OCI-LY7 (cell line): ENCODE measurements at regions of chr15 and their contacts with region 1.

Region 1: DNA sequence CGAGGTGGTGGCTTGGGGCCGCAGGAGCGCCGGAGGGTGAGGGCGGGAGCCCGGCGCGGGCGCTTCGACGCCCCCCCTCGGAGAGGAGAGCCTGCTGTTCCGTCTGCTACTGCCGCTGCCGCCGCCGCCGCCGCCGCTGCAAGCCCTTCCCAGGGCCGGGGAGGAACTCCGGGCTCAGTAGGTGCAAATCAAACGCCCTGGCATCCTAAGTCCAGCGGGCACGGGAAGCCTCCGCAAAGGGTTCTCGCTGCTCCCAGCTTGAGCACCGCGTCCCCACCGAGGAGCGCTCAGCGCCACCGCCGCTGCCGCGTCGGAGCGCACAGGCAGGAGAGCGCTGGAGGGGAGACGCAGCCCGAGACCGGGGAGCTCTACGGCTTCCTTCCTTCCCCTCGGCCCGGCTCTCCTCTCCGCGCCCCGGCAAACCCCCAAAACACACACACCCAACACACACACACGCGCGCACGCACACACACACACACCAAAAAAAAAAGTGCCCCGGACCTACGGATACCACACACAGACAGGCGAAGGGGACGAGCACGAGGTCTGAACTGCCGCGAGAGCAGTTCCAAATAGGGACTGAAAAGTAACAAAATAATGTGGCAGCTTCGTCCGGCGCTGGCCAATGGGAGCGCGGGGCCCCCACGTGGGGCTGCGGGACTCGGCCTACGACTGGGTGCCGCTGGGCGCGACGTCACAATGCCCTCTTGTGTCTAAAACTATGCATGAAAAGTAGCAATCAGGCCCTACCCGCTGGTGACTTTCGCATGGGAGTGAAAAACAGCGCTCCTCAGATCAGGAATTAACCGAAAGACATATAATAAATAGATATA is at the start of gene TLE3:
- DNase-seq: peak; percentile 99
- H3K4me3 ChIP-seq: peak within 1 kb of the TSS; percentile 82
- H3K27ac ChIP-seq: peak within 1 kb of the TSS; percentile 71
- H3K4me1 ChIP-seq: peaks cover 68% of the 10 kb centered on the region
- CTCF ChIP-seq: peak; percentile 71
- total RNA-seq, gene TLE3: 19.7 and 37.9 TPM in 2 replicates

Region 2: GRCh38 chr15:69729161-69729748 is 368.3 kb before region 1 on chr15:
- CTCF ChIA-PET with region 1: no interaction called
- POLR2A ChIA-PET with region 1: no interaction called
- intact Hi-C with region 1: loop called (anchors 1 kb)
- DNase-seq: peak; percentile 56
- H3K4me3 ChIP-seq: no peak overlapping the region
- H3K27ac ChIP-seq: no peak overlapping the region
- H3K4me1 ChIP-seq: no peaks in the 10 kb centered on the region
- CTCF ChIP-seq: peak; percentile 99

Region 3: DNA sequence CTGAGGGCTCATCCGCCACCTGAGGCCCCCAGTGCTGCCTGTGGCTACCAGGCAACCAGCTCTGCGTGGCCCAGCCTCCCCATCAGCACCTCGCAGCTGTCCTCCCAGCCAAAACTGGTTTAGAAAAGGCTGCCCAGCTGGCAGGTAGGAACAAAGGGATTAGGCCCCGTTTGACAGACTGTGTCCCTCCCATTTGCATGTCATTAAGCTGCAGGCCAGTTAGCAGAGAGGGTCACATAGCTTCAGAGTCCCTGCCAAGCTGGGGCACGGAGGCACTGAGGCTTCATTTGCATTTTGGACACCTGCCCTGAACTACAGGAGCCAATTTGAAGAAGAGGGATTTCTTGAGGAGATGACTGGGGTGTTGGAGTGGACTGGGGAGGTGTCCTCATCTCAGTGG is 177.7 kb before region 1 on chr15:
- CTCF ChIA-PET with region 1: no interaction called
- POLR2A ChIA-PET with region 1: no interaction called
- intact Hi-C with region 1: loop called (anchors 2 kb)
- DNase-seq: peak; percentile 82
- H3K4me3 ChIP-seq: peak overlapping the region; percentile 23
- H3K27ac ChIP-seq: peak overlapping the region; percentile 86
- H3K4me1 ChIP-seq: peaks cover 57% of the 10 kb centered on the region
- CTCF ChIP-seq: no peak

Region 4: GRCh38 chr15:70036585-70037291 is 60.8 kb before region 1 on chr15:
- CTCF ChIA-PET with region 1: no interaction called
- POLR2A ChIA-PET with region 1: interaction called, 3 read pairs
- intact Hi-C with region 1: loop called (anchors 5 kb)
- DNase-seq: peak; percentile 76
- H3K4me3 ChIP-seq: peak overlapping the region; percentile 14
- H3K27ac ChIP-seq: peak overlapping the region; percentile 15
- H3K4me1 ChIP-seq: peaks cover 50% of the 10 kb centered on the region
- CTCF ChIP-seq: no peak

Region 5: DNA sequence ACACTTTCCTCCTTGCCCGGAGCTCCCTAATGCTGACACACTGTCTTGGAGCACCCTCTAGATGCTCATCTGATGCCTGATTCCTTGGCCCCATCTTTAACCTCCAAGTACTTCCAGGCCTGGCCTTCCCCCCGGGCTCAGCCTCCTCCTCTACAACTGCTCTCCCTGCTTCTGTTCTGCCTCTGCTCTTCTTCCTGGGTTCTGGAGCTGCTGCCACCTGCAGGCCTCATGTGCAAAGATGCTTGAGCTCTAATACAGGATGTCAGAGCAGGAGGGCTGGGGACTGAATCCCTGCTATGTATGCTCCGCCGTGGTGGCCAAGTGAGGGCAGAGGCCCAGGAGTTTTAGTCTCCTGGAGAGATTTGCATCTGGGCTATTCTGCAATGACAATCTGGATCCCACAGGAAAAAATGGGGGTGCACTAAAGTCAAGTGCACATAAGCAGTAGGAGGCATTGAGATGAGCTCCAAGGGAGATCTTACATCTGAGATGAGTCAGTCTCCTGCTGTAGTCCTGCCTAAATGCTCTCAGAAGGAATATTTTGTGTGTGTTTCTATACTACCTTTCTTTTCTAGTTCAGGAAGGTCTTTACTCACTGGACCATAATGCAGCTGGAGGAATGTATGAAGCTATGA is 369.5 kb after region 1 on chr15:
- CTCF ChIA-PET with region 1: no interaction called
- POLR2A ChIA-PET with region 1: no interaction called
- intact Hi-C with region 1: loop called (anchors 10 kb)
- DNase-seq: peak; percentile 71
- H3K4me3 ChIP-seq: no peak overlapping the region
- H3K27ac ChIP-seq: no peak overlapping the region
- H3K4me1 ChIP-seq: peaks cover 13% of the 10 kb centered on the region
- CTCF ChIP-seq: peak; percentile 90